ENCODE measurements at regions of chr2 and their contacts with region 1.

Region 1: DNA sequence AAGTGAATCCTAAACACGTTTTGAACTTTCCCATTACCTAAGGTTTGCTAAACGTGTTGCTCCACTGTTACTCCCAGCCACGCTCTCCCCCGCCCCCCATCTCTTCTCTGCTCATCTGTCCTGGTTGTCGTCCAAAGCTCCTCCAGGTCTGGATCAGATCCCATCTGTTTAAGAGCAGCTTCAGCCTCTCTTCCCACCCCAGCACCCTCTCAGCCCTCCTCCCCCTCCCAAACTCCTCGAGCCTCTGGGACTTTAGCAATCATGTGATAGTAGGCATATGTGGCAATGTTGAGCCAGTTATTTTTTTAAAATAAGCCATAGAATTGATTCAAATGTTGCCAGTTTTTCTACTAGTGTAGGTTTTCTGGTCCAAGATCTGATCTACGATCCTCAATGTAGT is 20.0 kb upstream of the LPIN1 start:
- DNase-seq: no peak
- H3K4me3 ChIP-seq: no peak overlapping the region
- H3K27ac ChIP-seq: no peak overlapping the region
- H3K4me1 ChIP-seq: no peaks in the 10 kb centered on the region
- H3K27me3 ChIP-seq: peaks cover 0 to 4% (median 0%) of the 10 kb centered on the region in 7 donors
- CTCF ChIP-seq: no peak
- POLR2A ChIP-seq: no peak

Region 2: DNA sequence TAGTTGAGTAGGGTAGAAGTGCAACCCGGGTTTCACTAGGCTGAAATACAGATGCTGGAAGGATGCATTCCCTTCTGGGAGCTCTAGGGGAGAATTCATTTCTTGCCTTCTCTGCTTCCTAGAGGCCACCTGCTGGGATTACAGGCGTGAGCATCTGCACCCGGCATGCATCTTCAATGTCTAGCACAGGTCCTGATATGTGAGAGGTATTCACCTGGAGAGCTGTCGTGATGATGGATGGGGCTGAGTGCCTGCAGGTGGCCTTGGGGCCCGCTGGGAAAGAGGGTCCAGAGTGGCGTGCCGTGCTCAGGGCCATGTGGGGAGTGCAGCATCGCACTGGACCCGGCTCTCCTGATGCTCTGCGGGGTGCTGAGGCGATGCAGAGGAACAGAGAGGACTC is 49.7 kb before region 1 on chr2:
- intact Hi-C with region 1: loop called (anchors 5 kb)
- DNase-seq: peak; percentile 52
- H3K4me3 ChIP-seq: no peak overlapping the region
- H3K27ac ChIP-seq: no peak overlapping the region
- H3K4me1 ChIP-seq: peaks cover 0 to 7% (median 0%) of the 10 kb centered on the region in 6 donors
- H3K27me3 ChIP-seq: peaks cover 0 to 43% (median 18%) of the 10 kb centered on the region in 7 donors
- CTCF ChIP-seq: no peak
- POLR2A ChIP-seq: no peak

Region 3: GRCh38 chr2:11955314-11955713 is 228.9 kb after region 1 on chr2:
- intact Hi-C with region 1: no loop called
- DNase-seq: no peak
- H3K4me3 ChIP-seq: no peak overlapping the region
- H3K27ac ChIP-seq: no peak overlapping the region
- H3K4me1 ChIP-seq: peaks cover 0 to 1% (median 0%) of the 10 kb centered on the region in 6 donors
- H3K27me3 ChIP-seq: no peaks in the 10 kb centered on the region
- CTCF ChIP-seq: no peak
- POLR2A ChIP-seq: no peak

Measured in spleen (tissue), 13 donors.